Dendritic cell treated with granulocyte-macrophage colony-stimulating factor and Interleukin-4, amounts not matched to agents 40 ng/mL and 50 ng/mL, for 4 days (primary cell): ENCODE measurements at regions of chr5 and their contacts with region 1.

Region 1: DNA sequence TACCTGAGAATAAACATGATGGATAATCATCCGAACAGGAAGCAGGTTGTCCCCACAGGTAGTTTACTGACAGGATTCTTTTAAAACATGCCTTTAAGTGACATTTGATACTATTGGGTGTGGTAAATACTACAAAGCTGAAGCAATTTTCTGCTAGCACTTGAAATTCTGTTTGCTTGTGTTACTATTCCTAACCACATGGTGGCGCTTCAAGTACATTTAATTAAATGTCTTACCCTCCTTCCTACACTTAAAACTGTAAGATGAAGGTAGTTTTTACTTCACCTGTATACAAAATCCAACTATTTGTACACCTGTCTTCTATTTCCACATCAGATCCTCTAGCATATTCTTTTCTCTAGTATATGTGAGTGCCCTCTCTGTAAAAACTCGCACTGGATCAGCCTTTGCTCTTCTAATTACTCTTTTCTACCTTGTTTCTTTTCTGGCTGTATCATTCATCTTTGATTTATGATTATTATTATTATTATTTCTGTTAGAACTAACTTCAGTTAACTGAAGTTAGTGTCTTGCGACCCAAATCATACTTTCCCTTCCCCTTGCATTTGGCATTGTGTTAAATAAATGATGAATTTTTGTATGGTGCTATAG is 18.4 kb downstream of the SLC25A46 start:
- H3K4me3 Mint-ChIP-seq: no peak overlapping the region
- H3K27ac Mint-ChIP-seq: no peak overlapping the region
- H3K4me1 Mint-ChIP-seq: no peaks in the 10 kb centered on the region
- H3K27me3 Mint-ChIP-seq: no peaks in the 10 kb centered on the region

Region 2: GRCh38 chr5:110397281-110397680 is 359.9 kb before region 1 on chr5:
- intact Hi-C with region 1: no loop called
- H3K4me3 Mint-ChIP-seq: no peak overlapping the region
- H3K27ac Mint-ChIP-seq: no peak overlapping the region
- H3K4me1 Mint-ChIP-seq: no peaks in the 10 kb centered on the region
- H3K27me3 Mint-ChIP-seq: no peaks in the 10 kb centered on the region

Region 3: DNA sequence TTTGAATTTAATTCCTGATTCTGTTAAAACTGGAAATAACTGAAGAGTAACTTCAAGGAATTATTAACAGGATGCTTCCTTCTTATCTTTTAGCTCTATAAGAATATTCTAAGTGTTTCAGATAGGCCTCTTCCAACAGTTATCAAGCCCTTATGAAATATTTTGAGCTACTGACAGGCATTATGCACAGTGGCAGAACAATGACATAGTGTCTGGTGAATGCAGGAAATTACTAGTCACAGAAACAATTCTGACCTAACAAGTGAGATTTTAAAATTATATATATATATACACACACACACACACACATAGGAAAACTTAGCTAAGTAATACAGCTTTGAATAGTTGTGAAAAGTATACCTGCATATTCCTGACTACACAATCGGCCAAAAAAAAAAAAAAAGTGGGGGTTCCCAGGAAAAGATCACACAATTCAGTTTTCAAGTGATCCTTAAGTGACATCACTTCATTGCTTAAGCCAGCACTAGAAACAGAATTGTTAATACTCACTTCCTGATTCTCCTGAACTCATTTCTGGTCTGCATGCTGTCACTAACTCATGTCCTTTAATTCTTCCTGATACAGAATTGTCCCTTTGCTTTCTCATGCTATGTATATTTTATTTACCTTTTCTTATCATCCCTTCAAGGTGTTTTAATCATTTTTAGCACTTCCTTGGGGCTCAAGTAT is 58.8 kb after region 1 on chr5:
- intact Hi-C with region 1: no loop called
- H3K4me3 Mint-ChIP-seq: no peak overlapping the region
- H3K27ac Mint-ChIP-seq: no peak overlapping the region
- H3K4me1 Mint-ChIP-seq: no peaks in the 10 kb centered on the region
- H3K27me3 Mint-ChIP-seq: no peaks in the 10 kb centered on the region

Region 4: DNA sequence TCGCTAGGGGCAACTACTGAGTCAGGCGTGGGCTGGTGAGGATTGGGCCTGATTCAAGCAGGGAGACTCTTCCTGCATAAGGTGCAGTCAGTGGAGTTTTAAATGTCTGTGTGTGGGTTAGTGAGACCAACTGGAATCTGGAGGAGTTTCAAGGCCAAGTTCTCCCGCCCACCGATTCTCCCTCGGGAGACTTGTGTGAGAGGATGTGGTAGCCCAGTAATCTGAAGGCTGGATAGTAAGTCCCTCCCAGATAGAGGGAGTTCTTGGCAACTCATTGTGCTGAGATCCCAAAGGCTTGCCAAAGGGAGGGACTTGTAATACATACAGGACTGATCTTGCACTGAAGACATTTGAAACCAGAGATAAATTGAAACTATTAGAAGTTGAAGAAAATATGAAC is 386.7 kb after region 1 on chr5:
- intact Hi-C with region 1: loop called (anchors 2 kb)
- H3K4me3 Mint-ChIP-seq: no peak overlapping the region
- H3K27ac Mint-ChIP-seq: no peak overlapping the region
- H3K4me1 Mint-ChIP-seq: no peaks in the 10 kb centered on the region
- H3K27me3 Mint-ChIP-seq: peaks cover 3% of the 10 kb centered on the region

Region 5: GRCh38 chr5:111278845-111279504 is 521.8 kb after region 1 on chr5:
- intact Hi-C with region 1: loop called (anchors 5 kb)
- H3K4me3 Mint-ChIP-seq: no peak overlapping the region
- H3K27ac Mint-ChIP-seq: no peak overlapping the region
- H3K4me1 Mint-ChIP-seq: no peaks in the 10 kb centered on the region
- H3K27me3 Mint-ChIP-seq: peaks cover under 1% of the 10 kb centered on the region